ENCODE measurements at regions of chr4 and their contacts with region 1.

Region 1: GRCh38 chr4:15598644-15599043 is 56.5 kb downstream of the FBXL5 start:
- DNase-seq: no peak
- H3K4me3 ChIP-seq: no peak overlapping the region
- H3K27ac ChIP-seq: peak overlapping the region; percentile 10 to 50 (median 23)
- H3K4me1 ChIP-seq: peaks cover 0 to 24% (median 18%) of the 10 kb centered on the region in 4 donors
- H3K27me3 ChIP-seq: no peaks in the 10 kb centered on the region
- CTCF ChIP-seq: no peak
- EP300 ChIP-seq: no peak
- POLR2A ChIP-seq: no peak

Region 2: DNA sequence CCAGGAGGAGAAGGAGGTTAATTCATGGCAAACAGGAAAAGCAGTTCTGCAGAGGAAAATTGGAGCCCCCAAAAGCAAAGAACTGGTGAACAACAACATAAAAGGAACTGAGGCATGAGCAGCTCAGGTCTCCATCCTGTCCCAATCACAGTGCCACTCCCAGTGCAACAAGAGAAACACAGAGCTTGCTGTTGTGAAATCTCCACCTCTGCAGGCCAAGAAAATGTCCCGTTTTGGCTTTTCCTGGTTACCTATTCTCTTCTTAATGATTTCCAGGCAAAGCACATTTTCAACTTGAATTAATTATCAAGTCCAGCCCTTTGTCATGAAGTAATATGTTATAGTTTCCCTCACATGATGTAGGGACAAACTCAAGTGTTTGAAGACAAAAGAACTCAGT is 170.0 kb before region 1 on chr4:
- intact Hi-C with region 1: no loop called
- DNase-seq: peak; percentile 85
- H3K4me3 ChIP-seq: peak overlapping the region in 3 of 4 donors; percentile 11 to 46 (median 32)
- H3K27ac ChIP-seq: peak overlapping the region; percentile 57 to 75 (median 66)
- H3K4me1 ChIP-seq: peaks cover 0 to 40% (median 31%) of the 10 kb centered on the region in 4 donors
- H3K27me3 ChIP-seq: no peaks in the 10 kb centered on the region
- CTCF ChIP-seq: no peak
- EP300 ChIP-seq: no peak
- POLR2A ChIP-seq: no peak

Region 3: GRCh38 chr4:15551740-15552446 is 46.8 kb before region 1 on chr4:
- intact Hi-C with region 1: loop called (anchors 1 kb)
- DNase-seq: no peak
- H3K4me3 ChIP-seq: no peak overlapping the region
- H3K27ac ChIP-seq: no peak overlapping the region
- H3K4me1 ChIP-seq: no peaks in the 10 kb centered on the region
- H3K27me3 ChIP-seq: no peaks in the 10 kb centered on the region
- CTCF ChIP-seq: no peak
- EP300 ChIP-seq: no peak
- POLR2A ChIP-seq: no peak

Region 4: DNA sequence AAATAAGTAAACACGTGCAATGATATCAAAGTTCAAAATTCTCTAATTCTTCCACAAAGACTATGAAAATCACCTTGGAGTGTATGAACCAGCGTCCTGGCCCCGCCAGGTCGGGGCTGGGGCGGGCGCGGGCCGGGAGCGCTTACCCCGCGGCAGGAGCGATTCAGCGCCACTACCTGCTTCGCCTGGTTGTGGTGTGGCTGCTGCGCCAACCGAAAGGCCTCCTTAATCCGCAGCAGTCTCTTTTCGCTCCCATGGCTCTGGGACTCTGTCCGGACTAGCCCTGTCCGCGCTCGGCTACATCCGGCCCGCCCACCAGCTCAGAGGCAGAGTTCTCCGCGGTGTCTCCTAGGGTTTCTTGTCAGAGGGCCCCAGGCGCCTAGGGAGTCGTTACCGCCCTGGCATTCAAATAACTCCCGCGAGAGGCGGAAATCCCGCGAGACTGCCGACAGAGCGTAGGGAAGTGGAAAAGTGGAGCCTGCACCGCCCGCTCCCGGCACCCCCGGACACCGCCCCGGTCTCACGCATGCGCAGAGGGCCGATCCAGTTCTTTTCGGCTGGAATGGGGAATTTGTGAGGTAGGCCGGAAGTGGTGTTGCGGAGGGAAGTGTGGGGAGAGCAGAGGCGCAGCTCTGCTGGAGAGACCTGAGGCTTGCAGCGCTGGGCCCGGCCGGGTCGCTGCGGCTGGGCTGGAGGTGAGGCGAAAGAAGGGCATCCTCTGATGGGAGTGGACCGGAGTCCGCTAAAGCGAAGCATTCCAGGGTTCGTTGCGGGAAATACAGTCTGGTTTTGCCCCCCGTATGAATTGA is 82.8 kb after region 1 on chr4 and contains the start of gene FAM200B:
- intact Hi-C with region 1: no loop called
- DNase-seq: peak; percentile 99
- H3K4me3 ChIP-seq: peak within 1 kb of the TSS; percentile 66 to 76 (median 74)
- H3K27ac ChIP-seq: peak within 1 kb of the TSS; percentile 87 to 93 (median 92)
- H3K4me1 ChIP-seq: peaks cover 14 to 33% (median 31%) of the 10 kb centered on the region in 4 donors
- H3K27me3 ChIP-seq: no peaks in the 10 kb centered on the region
- CTCF ChIP-seq: peak in 2 of 3 experiments; percentile 20 to 42
- EP300 ChIP-seq: no peak
- POLR2A ChIP-seq: peak; percentile 77
- total RNA-seq, gene FAM200B: 40.4 to 88.5 (median 71.2) TPM